Left ventricle myocardium superior (tissue), 1 donor: ENCODE measurements at regions of chrX and their contacts with region 1.

Region 1: DNA sequence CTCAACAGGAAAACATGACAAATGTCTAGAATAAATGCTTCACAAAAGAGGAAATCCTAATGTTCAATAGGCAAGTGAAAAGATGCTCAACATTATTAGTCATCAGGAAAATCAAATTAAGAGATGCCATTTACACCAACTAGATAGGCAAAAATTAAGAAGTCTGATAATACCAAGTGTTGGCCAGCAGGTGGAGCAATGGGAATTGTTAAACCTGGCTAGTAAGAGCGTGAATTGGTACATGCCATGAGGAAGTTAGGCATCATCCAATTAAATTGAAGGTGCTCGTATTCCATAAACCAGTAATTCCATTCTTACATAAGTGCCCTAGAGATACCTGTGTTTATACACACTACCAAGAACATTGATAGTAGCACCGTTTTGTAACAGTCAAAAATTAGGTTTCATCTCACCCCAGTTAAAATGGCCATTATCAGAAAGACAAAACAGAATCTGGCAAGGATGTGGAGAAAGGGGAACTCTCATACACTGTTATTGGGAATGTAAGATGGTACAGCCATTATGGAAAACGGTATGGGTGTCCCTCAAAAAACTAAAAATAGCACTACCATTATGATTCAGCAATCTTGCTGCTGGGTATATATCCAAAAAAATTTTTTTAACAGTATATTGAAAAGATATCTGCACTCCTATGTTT is 14.0 kb upstream of the ZCCHC18 start:
- DNase-seq: no peak
- ATAC-seq: no peak

Region 2: GRCh38 chrX:103789004-103789403 is 309.3 kb before region 1 on chrX:
- intact Hi-C with region 1: no loop called
- DNase-seq: no peak
- ATAC-seq: no peak

Region 3: GRCh38 chrX:103918581-103919269 is 179.6 kb before region 1 on chrX:
- intact Hi-C with region 1: no loop called
- DNase-seq: peak; percentile 75
- ATAC-seq: peak; percentile 95

Region 4: DNA sequence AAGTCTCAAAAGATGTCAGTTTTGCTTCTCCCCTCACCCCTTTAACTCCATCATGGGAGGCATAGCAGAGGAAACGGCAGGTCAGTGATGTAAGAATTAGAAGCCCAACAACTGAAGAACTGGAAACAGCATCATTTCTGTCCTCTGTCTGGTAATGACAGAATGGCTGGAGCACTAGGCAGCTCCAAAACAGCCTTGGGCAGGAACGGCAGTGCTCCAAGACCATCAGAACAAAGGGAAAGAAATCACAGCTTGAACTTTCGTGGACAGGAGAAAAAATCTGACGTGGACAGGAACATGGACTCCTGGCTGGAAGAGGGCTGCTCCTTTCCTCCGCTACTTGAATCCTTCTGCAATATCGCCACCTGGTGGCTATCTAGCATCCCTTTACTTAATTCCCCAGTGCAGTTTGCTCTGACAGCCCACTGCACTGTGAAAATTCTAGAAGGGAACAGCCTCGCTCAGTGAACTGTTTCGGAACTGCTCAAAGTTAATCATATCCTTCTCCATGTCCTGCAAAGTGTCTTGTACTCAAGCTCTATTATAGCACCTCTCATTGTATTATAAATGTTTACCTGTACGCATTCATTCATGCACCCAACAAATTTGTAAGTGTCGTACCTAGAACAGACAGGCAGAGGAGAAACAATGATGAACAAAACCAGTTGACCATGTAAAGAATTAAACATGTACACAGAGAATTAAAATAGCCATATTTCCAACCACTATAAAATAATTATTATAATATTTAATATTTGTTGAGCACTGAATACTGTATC is 38.1 kb after region 1 on chrX:
- intact Hi-C with region 1: loop called (anchors 1 kb)
- DNase-seq: peak; percentile 26
- ATAC-seq: peak; percentile 92

Region 5: DNA sequence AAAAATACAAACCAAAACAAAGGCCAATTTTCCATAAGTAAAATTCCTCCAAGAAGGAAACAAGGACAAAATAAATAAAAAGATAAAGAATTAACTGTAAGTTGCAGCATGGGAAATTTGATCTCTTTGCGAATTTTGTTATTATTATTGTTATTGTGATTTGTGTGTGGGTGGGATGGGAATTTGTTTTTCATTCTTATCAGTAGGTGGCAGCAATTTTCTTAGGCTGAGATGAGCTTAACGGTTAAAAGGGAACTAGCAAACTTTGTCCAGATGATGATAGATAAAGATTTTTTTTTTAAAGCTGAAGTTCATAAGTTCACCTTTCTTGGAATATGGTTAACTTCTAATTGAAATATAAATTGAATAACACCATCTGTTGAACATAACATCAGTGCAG is 384.5 kb after region 1 on chrX:
- intact Hi-C with region 1: no loop called
- DNase-seq: no peak
- ATAC-seq: no peak